CD8-positive, alpha-beta T cell (primary cell): ENCODE measurements at regions of chr1 and their contacts with region 1.

Region 1: DNA sequence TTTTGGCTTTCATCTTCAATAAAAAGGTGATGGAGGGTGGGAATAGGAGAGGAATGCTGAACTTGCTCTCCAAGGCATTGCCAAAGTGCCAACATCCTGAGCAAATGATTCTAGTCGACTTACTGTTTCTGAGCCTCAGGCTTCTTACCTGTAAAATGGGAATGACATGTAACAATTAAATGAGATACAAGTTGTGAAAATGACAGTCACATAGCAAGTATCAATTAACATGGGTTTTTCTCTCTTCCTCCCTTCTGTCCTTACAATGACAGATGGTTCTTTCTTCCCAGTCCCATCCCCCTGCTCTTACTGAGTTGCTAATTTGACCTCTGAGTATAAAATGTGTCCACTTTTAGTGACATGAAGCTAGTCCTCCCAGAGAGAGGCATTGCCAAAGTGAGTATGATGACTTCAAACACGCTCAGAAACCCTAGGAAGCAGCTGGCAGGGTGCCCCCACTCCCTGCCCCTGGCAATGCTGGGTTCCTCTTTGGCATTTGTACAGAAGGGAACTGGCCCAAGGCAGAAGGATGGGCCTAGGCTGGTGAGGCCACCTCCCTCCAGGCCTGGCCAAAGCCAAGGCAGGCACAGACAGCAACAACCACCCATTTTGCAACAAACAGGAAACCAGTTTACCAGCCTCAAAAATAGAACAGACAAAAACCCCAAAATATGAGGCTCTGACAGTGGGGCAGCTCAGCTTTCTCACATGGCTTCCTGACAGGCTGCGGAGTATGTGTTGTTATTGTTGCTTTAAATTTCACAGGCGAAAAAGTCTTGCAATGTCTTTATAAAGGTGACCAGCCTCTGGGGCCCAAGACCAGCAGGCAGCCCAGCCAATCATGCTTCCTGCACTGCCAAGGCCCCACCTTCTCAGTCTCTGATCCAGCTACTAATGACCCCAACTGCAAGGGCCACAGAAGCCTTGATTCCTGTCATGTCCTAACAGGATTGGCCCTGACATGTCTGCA is 115.9 kb downstream of the HIVEP3 start:
- DNase-seq: peak in 8 of 9 experiments; percentile 14 to 74 (median 42)
- ATAC-seq: peak; percentile 42
- H3K4me3 ChIP-seq: peak overlapping the region in 1 of 2 experiments; percentile 0
- H3K4me3 Mint-ChIP-seq: peak overlapping the region; percentile 61
- H3K27ac ChIP-seq: peak overlapping the region; percentile 26 to 75
- H3K27ac Mint-ChIP-seq: peak overlapping the region; percentile 94
- H3K4me1 ChIP-seq: peaks cover 81% of the 10 kb centered on the region
- H3K4me1 Mint-ChIP-seq: peaks cover 87% of the 10 kb centered on the region
- H3K27me3 ChIP-seq: no peaks in the 10 kb centered on the region
- H3K27me3 Mint-ChIP-seq: no peaks in the 10 kb centered on the region
- CTCF ChIP-seq: no peak

Region 2: DNA sequence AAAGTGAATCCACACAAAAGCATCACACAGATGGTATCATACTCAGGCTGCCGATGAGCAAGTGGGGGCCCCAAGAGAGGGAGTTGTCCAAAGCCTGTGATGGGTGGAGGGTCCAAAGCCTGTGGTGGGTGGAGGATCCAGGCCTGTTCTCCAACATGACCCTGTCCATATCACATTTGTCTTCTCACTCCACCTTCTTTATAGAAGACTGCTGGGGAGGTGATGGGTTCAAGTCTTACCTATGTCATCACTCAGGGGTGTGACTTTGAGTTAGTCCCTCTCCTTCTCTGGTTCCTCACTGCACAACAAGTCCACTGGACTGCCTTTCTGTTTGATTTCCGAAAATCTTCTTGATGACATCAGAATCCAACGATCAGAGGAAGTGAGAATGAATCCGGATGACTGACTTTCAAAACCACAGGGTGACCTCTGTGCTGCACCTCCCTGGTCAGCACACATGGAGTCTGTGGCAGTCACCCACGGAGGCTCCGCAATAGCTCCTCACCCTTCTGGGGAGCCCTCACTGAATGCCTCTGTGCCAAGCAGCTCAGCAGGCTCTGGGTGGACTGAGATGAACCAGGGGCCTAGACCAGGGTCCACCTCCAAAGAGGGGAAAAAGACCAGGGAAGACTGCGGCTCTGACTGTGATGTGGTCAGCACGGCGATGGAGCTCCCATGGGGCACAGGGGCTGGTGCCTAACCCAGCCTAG is 50.9 kb before region 1 on chr1:
- CTCF ChIA-PET with region 1: no interaction called
- POLR2A ChIA-PET with region 1: interaction called, 3 read pairs
- intact Hi-C with region 1: loop called (anchors 5 kb)
- DNase-seq: peak in 1 of 9 experiments; percentile 38
- ATAC-seq: no peak
- H3K4me3 ChIP-seq: no peak overlapping the region
- H3K4me3 Mint-ChIP-seq: no peak overlapping the region
- H3K27ac ChIP-seq: no peak overlapping the region
- H3K27ac Mint-ChIP-seq: peak overlapping the region; percentile 55
- H3K4me1 ChIP-seq: peaks cover 47% of the 10 kb centered on the region
- H3K4me1 Mint-ChIP-seq: peaks cover 53% of the 10 kb centered on the region
- H3K27me3 ChIP-seq: no peaks in the 10 kb centered on the region
- H3K27me3 Mint-ChIP-seq: no peaks in the 10 kb centered on the region
- CTCF ChIP-seq: no peak

Region 3: DNA sequence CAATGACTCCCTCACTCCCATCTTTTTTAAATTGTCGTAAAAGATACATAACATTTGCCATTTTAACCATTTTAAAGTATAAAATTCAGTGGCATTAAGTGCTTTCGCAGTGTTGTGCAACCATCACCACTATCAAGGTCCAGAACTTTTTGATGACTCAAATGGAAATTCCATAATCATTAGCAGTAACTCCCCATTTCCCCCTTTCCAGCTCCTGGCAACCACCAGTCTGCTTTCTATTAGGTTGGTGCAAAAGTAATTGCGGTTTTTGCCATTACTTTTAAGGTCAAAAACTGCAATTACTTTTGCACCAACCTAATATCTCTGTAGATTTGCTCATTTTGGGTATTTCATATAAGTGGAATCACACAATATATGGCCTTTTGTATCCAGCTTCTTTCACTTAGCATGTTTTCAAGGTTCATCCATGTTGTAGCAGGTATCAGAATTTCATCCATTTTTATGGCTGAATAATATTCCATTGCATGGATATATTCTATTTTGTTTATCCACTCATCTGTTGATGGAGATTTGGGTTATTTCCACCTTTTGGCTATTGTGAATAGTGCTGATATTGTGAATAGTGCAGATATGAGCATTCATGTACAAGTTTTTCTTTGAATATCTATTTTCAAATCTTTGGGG is 43.8 kb before region 1 on chr1:
- CTCF ChIA-PET with region 1: no interaction called
- POLR2A ChIA-PET with region 1: no interaction called
- intact Hi-C with region 1: loop called (anchors 5 kb)
- DNase-seq: no peak
- ATAC-seq: no peak
- H3K4me3 ChIP-seq: no peak overlapping the region
- H3K4me3 Mint-ChIP-seq: no peak overlapping the region
- H3K27ac ChIP-seq: no peak overlapping the region
- H3K27ac Mint-ChIP-seq: no peak overlapping the region
- H3K4me1 ChIP-seq: peaks cover 12% of the 10 kb centered on the region
- H3K4me1 Mint-ChIP-seq: peaks cover 13% of the 10 kb centered on the region
- H3K27me3 ChIP-seq: no peaks in the 10 kb centered on the region
- H3K27me3 Mint-ChIP-seq: no peaks in the 10 kb centered on the region
- CTCF ChIP-seq: no peak